ENCODE measurements at regions of chr12 and their contacts with region 1.

Region 1: GRCh38 chr12:6944381-6945186 is 762 bp downstream of the C12orf57 start:
- DNase-seq: peak; percentile 89
- H3K4me3 ChIP-seq: peak overlapping the region; percentile 20 to 51 (median 51)
- H3K27ac ChIP-seq: peak overlapping the region; percentile 57
- H3K4me1 ChIP-seq: peaks cover 15% of the 10 kb centered on the region
- H3K27me3 ChIP-seq: no peaks in the 10 kb centered on the region
- CTCF ChIP-seq: peak; percentile 72 to 89
- POLR2A ChIP-seq: no peak

Region 2: DNA sequence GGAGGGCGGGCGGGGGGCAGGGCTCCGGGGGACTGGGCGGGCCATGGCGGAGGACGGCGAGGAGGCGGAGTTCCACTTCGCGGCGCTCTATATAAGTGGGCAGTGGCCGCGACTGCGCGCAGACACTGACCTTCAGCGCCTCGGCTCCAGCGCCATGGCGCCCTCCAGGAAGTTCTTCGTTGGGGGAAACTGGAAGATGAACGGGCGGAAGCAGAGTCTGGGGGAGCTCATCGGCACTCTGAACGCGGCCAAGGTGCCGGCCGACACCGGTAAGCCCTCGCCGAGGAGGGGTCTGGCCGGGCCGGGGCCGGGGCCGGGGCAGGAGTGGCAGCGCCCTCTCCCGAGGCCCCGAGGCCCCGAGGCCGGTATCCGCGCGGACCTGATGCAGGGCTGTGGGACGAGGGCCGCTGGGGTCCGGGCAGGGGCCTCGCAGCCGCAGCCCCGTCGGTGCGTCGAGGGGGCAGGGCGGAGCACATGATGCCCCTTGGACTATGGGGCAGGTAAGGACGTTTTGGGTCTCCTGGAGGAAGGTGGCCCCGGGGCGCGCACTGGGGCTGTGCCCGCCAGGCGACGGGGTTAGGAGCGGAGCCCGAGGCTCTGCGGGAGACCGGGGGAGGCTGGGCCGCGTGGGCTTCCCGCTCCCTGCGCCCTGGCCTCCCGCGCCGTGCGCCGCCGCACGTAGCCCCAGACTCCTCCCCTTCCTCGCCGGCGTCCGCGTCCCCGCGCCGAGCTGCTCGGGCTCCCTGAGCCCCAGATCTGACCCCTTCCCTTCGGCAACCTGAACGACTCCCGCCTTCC is 77.0 kb before region 1 on chr12 and contains the start of gene TPI1:
- CTCF ChIA-PET with region 1: interaction called, 27 read pairs
- POLR2A ChIA-PET with region 1: interaction called, 10 read pairs
- dilution Hi-C with region 1: no loop called
- intact Hi-C with region 1: loop called (anchors 1 kb)
- DNase-seq: peak; percentile 78
- H3K4me3 ChIP-seq: peak within 1 kb of the TSS; percentile 60 to 95 (median 75)
- H3K27ac ChIP-seq: peak within 1 kb of the TSS; percentile 43
- H3K4me1 ChIP-seq: peaks cover 32% of the 10 kb centered on the region
- H3K27me3 ChIP-seq: no peaks in the 10 kb centered on the region
- CTCF ChIP-seq: no peak
- POLR2A ChIP-seq: peak; percentile 98
- total RNA-seq, gene TPI1: 643 and 676 TPM in 2 replicates

Region 3: GRCh38 chr12:6927379-6928024 is 17.1 kb before region 1 on chr12 and contains the start of gene ATN1:
- CTCF ChIA-PET with region 1: interaction called, 94 read pairs
- POLR2A ChIA-PET with region 1: interaction called, 24 read pairs
- dilution Hi-C with region 1: no loop called
- intact Hi-C with region 1: loop called (anchors 1 kb)
- DNase-seq: peak; percentile 83
- H3K4me3 ChIP-seq: peak within 1 kb of the TSS; percentile 88 to 92 (median 90)
- H3K27ac ChIP-seq: peak within 1 kb of the TSS; percentile 72
- H3K4me1 ChIP-seq: peaks cover 48% of the 10 kb centered on the region
- H3K27me3 ChIP-seq: no peaks in the 10 kb centered on the region
- CTCF ChIP-seq: no peak
- POLR2A ChIP-seq: peak; percentile 55
- total RNA-seq, gene ATN1: 117 and 122 TPM in 2 replicates

Region 4: GRCh38 chr12:6965026-6965661 is 20.6 kb after region 1 on chr12:
- CTCF ChIA-PET with region 1: interaction called, 124 read pairs
- POLR2A ChIA-PET with region 1: interaction called, 6 read pairs
- dilution Hi-C with region 1: no loop called
- intact Hi-C with region 1: loop called (anchors 1 kb)
- DNase-seq: peak; percentile 80
- H3K4me3 ChIP-seq: no peak overlapping the region
- H3K27ac ChIP-seq: no peak overlapping the region
- H3K4me1 ChIP-seq: peaks cover 23% of the 10 kb centered on the region
- H3K27me3 ChIP-seq: no peaks in the 10 kb centered on the region
- CTCF ChIP-seq: peak; percentile 89 to 92
- POLR2A ChIP-seq: no peak

Region 5: GRCh38 chr12:7042842-7043241 is 98.3 kb after region 1 on chr12:
- CTCF ChIA-PET with region 1: interaction called, 4 read pairs
- POLR2A ChIA-PET with region 1: no interaction called
- dilution Hi-C with region 1: no loop called
- intact Hi-C with region 1: loop called (anchors 1 kb)
- DNase-seq: peak; percentile 43
- H3K4me3 ChIP-seq: no peak overlapping the region
- H3K27ac ChIP-seq: no peak overlapping the region
- H3K4me1 ChIP-seq: peaks cover 6% of the 10 kb centered on the region
- H3K27me3 ChIP-seq: peaks cover 2 to 3% of the 10 kb centered on the region in 2 experiments
- CTCF ChIP-seq: peak; percentile 9 to 24
- POLR2A ChIP-seq: no peak

Region 6: GRCh38 chr12:7108796-7109571 is 164.4 kb after region 1 on chr12 and contains the start of gene C1RL:
- CTCF ChIA-PET with region 1: interaction called, 73 read pairs
- POLR2A ChIA-PET with region 1: interaction called, 3 read pairs
- dilution Hi-C with region 1: no loop called
- intact Hi-C with region 1: loop called (anchors 1 kb)
- DNase-seq: peak; percentile 74
- H3K4me3 ChIP-seq: peak within 1 kb of the TSS; percentile 23 to 64 (median 39)
- H3K27ac ChIP-seq: peak within 1 kb of the TSS; percentile 61
- H3K4me1 ChIP-seq: peaks cover 8% of the 10 kb centered on the region
- H3K27me3 ChIP-seq: no peaks in the 10 kb centered on the region
- CTCF ChIP-seq: peak; percentile 97 to 98
- POLR2A ChIP-seq: no peak
- total RNA-seq, gene C1RL: 22.5 and 25.0 TPM in 2 replicates

Region 7: GRCh38 chr12:7219599-7220243 is 275.1 kb after region 1 on chr12:
- CTCF ChIA-PET with region 1: no interaction called
- POLR2A ChIA-PET with region 1: no interaction called
- dilution Hi-C with region 1: no loop called
- intact Hi-C with region 1: no loop called
- DNase-seq: peak; percentile 71
- H3K4me3 ChIP-seq: no peak overlapping the region
- H3K27ac ChIP-seq: no peak overlapping the region
- H3K4me1 ChIP-seq: no peaks in the 10 kb centered on the region
- H3K27me3 ChIP-seq: peaks cover 0 to 1% of the 10 kb centered on the region in 2 experiments
- CTCF ChIP-seq: peak; percentile 74 to 75
- POLR2A ChIP-seq: no peak

Region 8: GRCh38 chr12:7638760-7639555 is 694.4 kb after region 1 on chr12:
- CTCF ChIA-PET with region 1: interaction called, 3 read pairs
- POLR2A ChIA-PET with region 1: no interaction called
- dilution Hi-C with region 1: no loop called
- intact Hi-C with region 1: loop called (anchors 1 kb)
- DNase-seq: peak; percentile 75
- H3K4me3 ChIP-seq: peak overlapping the region in 1 of 3 experiments; percentile 16
- H3K27ac ChIP-seq: no peak overlapping the region
- H3K4me1 ChIP-seq: no peaks in the 10 kb centered on the region
- H3K27me3 ChIP-seq: peaks cover 5 to 7% of the 10 kb centered on the region in 2 experiments
- CTCF ChIP-seq: peak; percentile 70
- POLR2A ChIP-seq: no peak